Colonic mucosa (tissue), 4 donors: ENCODE measurements at regions of chr15 and their contacts with region 1.

Region 1: DNA sequence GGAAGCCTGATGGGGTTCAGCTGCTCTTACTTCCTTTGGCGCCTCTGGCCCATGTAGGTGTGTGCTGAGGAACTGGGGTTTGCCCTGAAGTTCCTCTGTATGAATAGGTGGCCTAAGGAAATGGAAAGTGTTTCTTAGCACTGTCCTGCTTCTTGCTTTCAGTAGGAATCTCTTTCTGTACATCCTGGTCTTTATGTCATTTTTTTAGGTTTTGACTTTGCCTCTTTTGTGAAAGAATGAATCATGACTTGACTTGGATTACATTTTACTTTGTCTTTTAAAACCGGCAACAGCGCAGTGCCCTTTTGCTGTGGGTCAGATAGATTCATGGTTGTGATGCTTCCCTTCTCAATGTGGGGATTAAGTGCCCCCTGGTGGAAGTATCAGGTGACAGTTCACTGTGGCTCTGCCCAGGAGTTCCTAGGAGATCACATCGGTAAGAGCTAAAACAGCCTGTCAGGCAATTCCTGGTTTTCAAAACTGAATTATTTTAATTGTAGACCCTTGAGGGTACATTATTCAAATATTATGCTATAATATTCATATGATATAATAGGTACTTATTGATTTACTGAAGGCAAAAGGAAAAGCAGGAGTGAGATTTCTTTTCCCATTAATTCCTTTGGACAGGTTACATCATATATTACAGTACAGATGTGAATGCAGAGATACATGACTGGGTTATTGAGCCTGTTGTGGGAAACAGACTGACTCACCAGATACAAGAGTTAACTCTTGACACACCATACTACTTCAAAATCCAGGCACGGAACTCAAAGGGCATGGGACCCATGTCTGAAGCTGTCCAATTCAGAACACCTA is 95.4 kb downstream of the HCN4 start:
- DNase-seq: peak; percentile 56
- H3K4me3 ChIP-seq: no peak overlapping the region
- H3K27ac ChIP-seq: no peak overlapping the region
- H3K4me1 ChIP-seq: no peaks in the 10 kb centered on the region
- H3K27me3 ChIP-seq: no peaks in the 10 kb centered on the region
- CTCF ChIP-seq: peak; percentile 71

Region 2: GRCh38 chr15:72722071-72722696 is 551.2 kb before region 1 on chr15:
- intact Hi-C with region 1: loop called (anchors 10 kb)
- DNase-seq: peak; percentile 74
- H3K4me3 ChIP-seq: no peak overlapping the region
- H3K27ac ChIP-seq: no peak overlapping the region
- H3K4me1 ChIP-seq: no peaks in the 10 kb centered on the region
- H3K27me3 ChIP-seq: no peaks in the 10 kb centered on the region
- CTCF ChIP-seq: peak; percentile 59

Region 3: DNA sequence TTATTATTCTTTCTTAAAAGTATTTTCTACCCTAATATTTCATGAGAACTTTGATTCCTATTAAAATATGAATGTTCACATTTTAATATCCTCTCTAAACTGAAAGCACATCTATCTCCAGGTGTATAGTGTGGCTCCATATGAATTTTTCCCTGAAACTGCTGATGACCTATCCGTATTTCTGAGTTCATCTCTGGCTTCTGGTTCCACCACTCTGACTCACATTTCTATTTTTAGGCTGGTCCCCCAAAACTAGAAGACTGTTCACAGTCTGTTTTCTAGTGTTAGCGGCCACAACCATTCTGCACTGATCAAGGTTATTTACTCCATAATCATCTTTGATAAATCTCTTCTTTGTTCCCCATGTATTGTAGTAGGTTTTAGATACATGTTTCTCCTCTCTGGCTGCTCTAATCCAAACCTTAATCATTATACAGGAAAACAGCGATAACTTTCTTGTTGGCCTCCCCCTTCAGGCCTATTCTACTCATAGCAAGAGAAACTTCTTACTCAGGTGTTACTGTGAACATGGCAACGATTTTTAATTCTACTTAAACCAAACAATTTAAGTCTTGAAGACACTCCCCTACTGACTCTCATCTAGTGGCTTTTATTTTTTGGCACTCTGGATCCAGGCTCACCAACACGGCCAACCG is 502.6 kb before region 1 on chr15:
- intact Hi-C with region 1: loop called (anchors 10 kb)
- DNase-seq: no peak
- H3K4me3 ChIP-seq: no peak overlapping the region
- H3K27ac ChIP-seq: no peak overlapping the region
- H3K4me1 ChIP-seq: no peaks in the 10 kb centered on the region
- H3K27me3 ChIP-seq: no peaks in the 10 kb centered on the region
- CTCF ChIP-seq: no peak